ENCODE measurements at regions of chrX and their contacts with region 1.

Region 1: DNA sequence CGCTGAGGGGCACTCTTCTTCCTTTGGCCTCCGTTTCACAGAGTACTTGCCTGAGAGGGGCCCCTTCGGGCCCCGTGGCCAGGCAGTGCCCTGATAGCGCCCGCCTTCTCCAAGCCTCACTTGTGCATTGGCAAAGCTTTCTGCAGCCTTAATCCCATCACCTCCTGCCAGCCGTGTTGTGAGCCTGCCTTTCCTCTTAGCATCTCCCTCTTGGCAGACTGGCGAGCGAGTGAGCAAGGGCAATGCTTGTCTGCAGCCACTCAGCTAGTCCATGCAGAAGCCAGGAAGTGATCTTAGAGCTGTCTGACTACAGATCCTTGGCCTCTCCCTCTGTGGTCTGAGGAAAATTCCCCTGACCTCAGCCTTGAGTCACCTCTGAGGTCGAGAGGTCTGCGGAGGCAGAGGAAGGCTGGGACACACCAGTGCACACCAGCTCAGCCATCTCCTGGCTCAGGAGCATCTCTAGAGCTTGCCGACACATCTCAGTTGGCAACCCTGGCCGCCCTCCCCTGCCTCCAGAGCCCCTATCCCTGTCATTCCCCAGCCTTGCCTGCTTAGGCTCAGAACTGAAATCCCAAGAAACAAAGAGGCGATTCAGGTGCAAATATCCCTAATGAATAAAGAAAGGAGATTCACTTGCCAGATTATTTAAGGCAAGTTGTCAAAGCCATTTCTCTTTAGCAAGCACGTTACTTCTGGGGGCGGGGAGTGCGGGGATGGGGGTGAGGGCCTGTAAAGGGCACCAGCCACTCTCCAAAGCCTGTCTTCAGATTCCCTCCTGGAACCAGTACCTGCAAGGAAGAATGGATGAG is 143.5 kb upstream of the MAMLD1 start:
- DNase-seq: no peak
- ATAC-seq: peak; percentile 42 to 59 (median 49)
- H3K4me3 ChIP-seq: no peak overlapping the region
- H3K27ac ChIP-seq: no peak overlapping the region
- H3K4me1 ChIP-seq: no peaks in the 10 kb centered on the region
- H3K27me3 ChIP-seq: peaks cover 0 to 12% (median 0%) of the 10 kb centered on the region in 3 donors
- CTCF ChIP-seq: no peak

Region 2: DNA sequence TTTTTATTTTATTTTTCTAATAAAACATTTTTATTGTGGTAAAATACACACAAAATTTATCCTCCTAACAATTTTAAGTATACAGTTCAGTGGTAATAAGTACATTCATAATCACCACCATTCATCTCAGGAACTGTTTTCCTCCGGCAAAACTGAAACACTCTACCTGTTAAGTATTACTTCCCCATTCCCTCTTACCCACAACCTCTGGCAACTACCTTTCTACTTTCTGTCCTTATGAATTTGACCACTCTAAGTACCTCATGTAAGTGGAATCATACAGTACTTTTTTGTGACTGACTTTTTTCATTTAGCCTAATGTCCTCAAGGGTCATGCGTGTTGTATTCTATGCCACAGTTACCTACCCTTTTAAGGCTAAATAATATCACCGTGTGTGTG is 311.3 kb before region 1 on chrX:
- intact Hi-C with region 1: no loop called
- DNase-seq: no peak
- ATAC-seq: no peak
- H3K4me3 ChIP-seq: no peak overlapping the region
- H3K27ac ChIP-seq: no peak overlapping the region
- H3K4me1 ChIP-seq: no peaks in the 10 kb centered on the region
- H3K27me3 ChIP-seq: no peaks in the 10 kb centered on the region
- CTCF ChIP-seq: no peak

Region 3: DNA sequence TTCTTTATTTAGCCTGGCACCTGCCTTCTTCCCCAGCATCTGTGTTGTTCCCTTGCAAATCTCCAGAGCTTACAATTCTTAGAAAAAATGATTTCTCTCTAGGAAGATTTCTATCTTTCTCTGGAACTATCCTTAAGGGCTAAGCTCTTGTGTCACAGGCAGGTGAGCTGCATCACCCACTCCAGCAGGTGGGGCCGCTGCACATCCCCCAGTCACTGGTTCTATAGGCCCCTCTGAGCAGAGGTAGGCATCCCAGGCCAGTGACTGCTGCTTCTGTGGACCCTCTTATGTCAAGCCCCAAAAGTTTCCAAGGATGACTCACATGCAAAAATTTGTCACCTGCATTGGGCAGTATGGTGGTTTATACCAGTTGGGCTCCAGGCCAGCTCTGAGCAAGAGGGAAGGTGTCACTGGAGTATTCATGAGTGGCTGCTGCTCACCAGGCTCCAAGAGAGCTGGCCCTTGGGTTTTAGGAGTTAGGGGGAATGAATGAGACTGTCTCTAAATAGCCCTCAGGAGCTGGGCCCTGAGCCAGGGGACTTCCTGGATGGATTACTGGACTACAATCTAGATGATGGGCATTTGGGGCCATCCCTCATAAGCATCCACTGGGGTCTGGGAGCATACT is 73.2 kb before region 1 on chrX:
- intact Hi-C with region 1: no loop called
- DNase-seq: no peak
- ATAC-seq: peak; percentile 37 to 46 (median 43)
- H3K4me3 ChIP-seq: no peak overlapping the region
- H3K27ac ChIP-seq: no peak overlapping the region
- H3K4me1 ChIP-seq: no peaks in the 10 kb centered on the region
- H3K27me3 ChIP-seq: no peaks in the 10 kb centered on the region
- CTCF ChIP-seq: no peak

Region 4: GRCh38 chrX:150316564-150316963 is 97.0 kb after region 1 on chrX:
- intact Hi-C with region 1: no loop called
- DNase-seq: no peak
- ATAC-seq: no peak
- H3K4me3 ChIP-seq: no peak overlapping the region
- H3K27ac ChIP-seq: no peak overlapping the region
- H3K4me1 ChIP-seq: no peaks in the 10 kb centered on the region
- H3K27me3 ChIP-seq: no peaks in the 10 kb centered on the region
- CTCF ChIP-seq: no peak

Region 5: GRCh38 chrX:150478496-150479492 is 259.2 kb after region 1 on chrX:
- intact Hi-C with region 1: loop called in 1 of 2 experiments (anchors 10 kb)
- DNase-seq: no peak
- ATAC-seq: no peak
- H3K4me3 ChIP-seq: no peak overlapping the region
- H3K27ac ChIP-seq: no peak overlapping the region
- H3K4me1 ChIP-seq: peaks cover 5% of the 10 kb centered on the region
- H3K27me3 ChIP-seq: no peaks in the 10 kb centered on the region
- CTCF ChIP-seq: no peak